Left ventricle myocardium superior (tissue), 1 donor: ENCODE measurements at regions of chr16 and their contacts with region 1.

Region 1: DNA sequence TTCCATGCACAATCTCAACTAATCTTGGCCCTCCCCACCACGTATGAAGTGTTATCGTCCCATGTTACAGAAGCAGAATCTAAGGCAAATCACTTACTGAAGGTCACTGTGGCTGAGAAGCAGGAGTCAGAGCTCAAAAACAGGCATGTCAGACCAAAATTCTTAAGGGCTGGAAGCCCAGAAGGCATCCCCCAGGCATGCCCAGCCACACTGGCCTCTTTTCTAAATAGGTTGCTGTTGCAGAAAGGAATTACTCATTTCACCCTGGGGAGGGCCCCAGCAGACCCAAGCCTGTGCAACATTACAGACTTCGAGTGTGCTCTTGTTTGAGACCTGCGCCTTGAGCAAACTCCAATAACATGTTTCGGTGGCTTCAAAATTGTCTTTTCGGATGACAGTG is 194.1 kb downstream of the RBFOX1 start:
- DNase-seq: no peak
- ATAC-seq: no peak

Region 2: DNA sequence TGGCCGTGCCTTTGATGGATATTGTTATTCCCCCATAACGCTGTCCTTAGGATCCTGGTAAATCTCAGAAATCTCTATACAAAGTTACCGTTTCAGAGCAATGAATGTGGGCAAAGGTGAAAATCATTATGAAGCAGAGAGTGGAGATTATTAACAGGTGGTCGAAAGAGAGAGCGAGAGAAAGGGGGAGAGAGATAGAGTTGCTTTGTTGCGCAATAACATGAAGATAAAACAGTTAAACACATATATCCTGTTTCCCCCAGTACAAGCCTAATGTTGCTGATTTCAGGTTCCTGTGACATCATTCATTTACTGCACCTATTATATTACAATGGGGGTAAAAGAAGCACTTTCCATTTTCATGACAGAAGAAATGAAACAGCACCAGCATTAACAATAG is 729.5 kb before region 1 on chr16:
- intact Hi-C with region 1: loop called (anchors 5 kb)
- DNase-seq: no peak
- ATAC-seq: no peak

Region 3: GRCh38 chr16:7390974-7391373 is 135.8 kb before region 1 on chr16:
- intact Hi-C with region 1: no loop called
- DNase-seq: no peak
- ATAC-seq: peak; percentile 75